ENCODE measurements at regions of chrX and their contacts with region 1.

Region 1: GRCh38 chrX:136953867-136954787 is 73.6 kb upstream of the RBMX start:
- DNase-seq: peak in 1 of 2 donors; percentile 15
- ATAC-seq: no peak
- H3K4me3 ChIP-seq: no peak overlapping the region
- H3K27ac ChIP-seq: no peak overlapping the region
- H3K4me1 ChIP-seq: no peaks in the 10 kb centered on the region
- H3K27me3 ChIP-seq: no peaks in the 10 kb centered on the region
- CTCF ChIP-seq: peak in 3 of 5 experiments; percentile 26 to 49 (median 28)
- POLR2A ChIP-seq: no peak

Region 2: DNA sequence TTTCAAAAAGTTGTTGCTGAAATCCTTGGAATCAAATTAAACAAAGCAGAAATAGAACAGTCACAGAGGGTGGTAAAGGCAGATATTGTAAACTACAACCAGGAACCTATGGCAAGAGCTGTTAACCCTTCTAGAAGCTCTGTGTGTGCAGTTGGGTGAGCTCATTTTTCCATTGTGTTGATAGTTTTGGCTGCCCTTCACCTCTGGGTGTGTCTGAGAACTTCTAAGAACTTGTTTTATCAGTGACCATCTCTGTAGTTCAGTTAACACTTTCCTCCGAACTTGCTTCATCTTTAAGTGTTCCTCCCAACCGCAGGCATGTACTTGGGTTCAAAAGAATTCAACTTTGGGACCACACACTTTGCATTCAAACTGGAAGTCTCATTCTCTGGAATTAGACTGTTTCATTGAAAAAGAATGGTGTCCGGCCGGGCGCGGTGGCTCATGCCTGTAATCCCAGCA is 106.2 kb before region 1 on chrX:
- in situ Hi-C with region 1: no loop called
- intact Hi-C with region 1: no loop called
- DNase-seq: no peak
- ATAC-seq: no peak
- H3K4me3 ChIP-seq: no peak overlapping the region
- H3K27ac ChIP-seq: peak overlapping the region in 1 of 4 donors; percentile 0
- H3K4me1 ChIP-seq: peaks cover 9 to 10% of the 10 kb centered on the region in 2 donors
- H3K27me3 ChIP-seq: no peaks in the 10 kb centered on the region
- CTCF ChIP-seq: no peak
- POLR2A ChIP-seq: no peak

Region 3: GRCh38 chrX:137051978-137052642 is 98.0 kb after region 1 on chrX:
- in situ Hi-C with region 1: no loop called
- intact Hi-C with region 1: loop called (anchors 10 kb)
- DNase-seq: peak in 1 of 2 donors; percentile 24
- ATAC-seq: peak; percentile 63 to 78
- H3K4me3 ChIP-seq: peak overlapping the region; percentile 36 to 52 (median 50)
- H3K27ac ChIP-seq: no peak overlapping the region
- H3K4me1 ChIP-seq: no peaks in the 10 kb centered on the region
- H3K27me3 ChIP-seq: peaks cover 0 to 16% (median 7%) of the 10 kb centered on the region in 3 donors
- CTCF ChIP-seq: peak; percentile 32 to 84 (median 59)
- POLR2A ChIP-seq: no peak

Region 4: DNA sequence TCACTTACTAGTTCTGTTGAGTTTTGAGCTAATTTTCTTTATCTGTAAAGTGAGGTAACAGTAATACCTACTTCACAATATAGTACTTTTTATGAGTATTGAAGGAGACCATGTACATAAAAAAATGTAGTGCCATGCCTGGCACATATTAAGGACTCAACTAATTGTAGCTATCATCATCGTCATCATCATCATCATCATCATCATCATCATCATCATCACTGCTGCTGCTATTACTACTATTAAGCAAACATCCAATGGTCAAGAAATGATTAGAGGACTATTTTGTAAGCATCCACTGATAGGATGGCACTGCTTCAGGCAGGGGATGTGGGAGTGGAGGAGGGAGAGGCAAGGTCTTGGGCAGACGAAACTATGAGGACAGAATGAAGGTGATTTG is 127.1 kb after region 1 on chrX:
- in situ Hi-C with region 1: no loop called
- intact Hi-C with region 1: no loop called
- DNase-seq: no peak
- ATAC-seq: no peak
- H3K4me3 ChIP-seq: no peak overlapping the region
- H3K27ac ChIP-seq: no peak overlapping the region
- H3K4me1 ChIP-seq: no peaks in the 10 kb centered on the region
- H3K27me3 ChIP-seq: no peaks in the 10 kb centered on the region
- CTCF ChIP-seq: no peak
- POLR2A ChIP-seq: no peak

Region 5: GRCh38 chrX:137194164-137194563 is 240.0 kb after region 1 on chrX:
- in situ Hi-C with region 1: loop called in 1 of 4 experiments (anchors 10 kb)
- intact Hi-C with region 1: no loop called
- DNase-seq: peak in 1 of 2 donors; percentile 6
- ATAC-seq: no peak
- H3K4me3 ChIP-seq: no peak overlapping the region
- H3K27ac ChIP-seq: no peak overlapping the region
- H3K4me1 ChIP-seq: no peaks in the 10 kb centered on the region
- H3K27me3 ChIP-seq: no peaks in the 10 kb centered on the region
- CTCF ChIP-seq: no peak
- POLR2A ChIP-seq: no peak

Measured in gastrocnemius medialis (tissue), 4 donors.